PC-9 (cell line): ENCODE measurements at regions of chr2 and their contacts with region 1.

Region 1: GRCh38 chr2:45169339-45170190 is 160.3 kb upstream of the SIX2 start:
- DNase-seq: peak in 1 of 2 experiments; percentile 56
- H3K4me3 ChIP-seq: peak overlapping the region; percentile 79
- H3K27ac ChIP-seq: peak overlapping the region; percentile 57
- H3K4me1 ChIP-seq: peaks cover 57% of the 10 kb centered on the region
- H3K27me3 ChIP-seq: no peaks in the 10 kb centered on the region
- CTCF ChIP-seq: 0 out of 2 replicates have a peak, but pooled peaks have one; percentile 19

Region 2: GRCh38 chr2:44044281-44044720 is 1125.3 kb before region 1 on chr2:
- CTCF ChIA-PET with region 1: no interaction called
- POLR2A ChIA-PET with region 1: no interaction called
- intact Hi-C with region 1: no loop called
- DNase-seq: peak; percentile 79 to 86
- H3K4me3 ChIP-seq: no peak overlapping the region
- H3K27ac ChIP-seq: no peak overlapping the region
- H3K4me1 ChIP-seq: no peaks in the 10 kb centered on the region
- H3K27me3 ChIP-seq: no peaks in the 10 kb centered on the region
- CTCF ChIP-seq: peak; percentile 90

Region 3: GRCh38 chr2:45009303-45009927 is 160.2 kb before region 1 on chr2 and contains the start of gene SIX2:
- CTCF ChIA-PET with region 1: interaction called, 6 read pairs
- POLR2A ChIA-PET with region 1: no interaction called
- intact Hi-C with region 1: loop called (anchors 1 kb)
- DNase-seq: peak; percentile 98 to 99
- H3K4me3 ChIP-seq: peak within 1 kb of the TSS; percentile 69
- H3K27ac ChIP-seq: no peak within 1 kb of the TSS
- H3K4me1 ChIP-seq: peaks cover 23% of the 10 kb centered on the region
- H3K27me3 ChIP-seq: no peaks in the 10 kb centered on the region
- CTCF ChIP-seq: no peak
- total RNA-seq, gene SIX2: 10.2 and 11.9 TPM in 2 replicates

Region 4: DNA sequence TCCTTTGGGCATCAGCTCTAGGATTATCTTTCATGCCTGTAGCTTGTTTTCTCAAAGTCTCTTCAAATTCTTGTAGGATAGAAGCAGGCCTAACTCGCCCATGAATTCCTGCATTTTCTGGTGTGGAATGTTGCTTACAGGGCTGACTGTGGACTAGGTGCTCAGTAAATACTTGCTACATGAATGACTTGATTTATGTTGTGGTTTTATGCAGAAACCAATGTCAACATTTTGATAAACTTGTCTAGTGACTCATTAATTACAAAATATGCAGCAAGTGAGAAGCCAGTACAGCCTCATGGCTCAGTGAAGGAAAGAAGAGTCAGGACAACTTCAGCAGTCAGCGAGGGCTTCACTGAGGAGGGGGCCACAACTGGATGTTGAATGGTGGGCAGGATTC is 49.7 kb before region 1 on chr2:
- CTCF ChIA-PET with region 1: interaction called, 12 read pairs
- POLR2A ChIA-PET with region 1: interaction called, 13 read pairs
- intact Hi-C with region 1: loop called (anchors 2 kb)
- DNase-seq: peak; percentile 67 to 100
- H3K4me3 ChIP-seq: no peak overlapping the region; the same call in 1 of the 2 replicates
- H3K27ac ChIP-seq: peak overlapping the region; percentile 85
- H3K4me1 ChIP-seq: peaks cover 63% of the 10 kb centered on the region
- H3K27me3 ChIP-seq: no peaks in the 10 kb centered on the region
- CTCF ChIP-seq: no peak

Region 5: GRCh38 chr2:45494269-45494977 is 324.9 kb after region 1 on chr2:
- CTCF ChIA-PET with region 1: interaction called, 6 read pairs
- POLR2A ChIA-PET with region 1: interaction called, 6 read pairs
- intact Hi-C with region 1: loop called (anchors 5 kb)
- DNase-seq: peak; percentile 17 to 68
- H3K4me3 ChIP-seq: no peak overlapping the region
- H3K27ac ChIP-seq: no peak overlapping the region
- H3K4me1 ChIP-seq: no peaks in the 10 kb centered on the region
- H3K27me3 ChIP-seq: no peaks in the 10 kb centered on the region
- CTCF ChIP-seq: peak; percentile 96